Heart right ventricle (tissue), 16 donors: ENCODE measurements at regions of chr1 and their contacts with region 1.

Region 1: DNA sequence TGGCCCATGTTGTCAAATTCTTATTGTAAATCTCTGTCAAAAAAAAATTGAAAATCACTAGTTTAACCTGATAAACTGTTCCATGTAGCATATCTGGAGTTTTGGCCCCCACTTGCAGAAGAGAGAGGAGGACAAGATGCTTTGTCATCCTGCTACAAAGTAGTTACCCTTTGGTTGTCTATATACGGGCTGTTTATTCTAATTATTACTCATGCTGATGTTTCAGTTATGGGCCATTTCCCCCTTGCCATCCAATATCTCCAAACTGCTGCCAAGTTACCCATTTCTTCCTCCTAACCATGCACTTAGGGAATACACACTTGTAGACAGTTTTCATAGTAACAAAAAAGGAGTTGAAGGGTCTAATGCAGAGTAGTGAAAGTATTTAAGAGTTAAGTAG is 22.6 kb downstream of the STX12 start:
- DNase-seq: no peak
- ATAC-seq: no peak
- H3K4me3 ChIP-seq: no peak overlapping the region
- H3K27ac ChIP-seq: no peak overlapping the region
- H3K4me1 ChIP-seq: peaks cover 0 to 8% (median 3%) of the 10 kb centered on the region in 9 donors
- H3K27me3 ChIP-seq: no peaks in the 10 kb centered on the region
- CTCF ChIP-seq: no peak

Region 2: GRCh38 chr1:27760426-27760825 is 35.2 kb before region 1 on chr1:
- intact Hi-C with region 1: loop called in 1 of 10 experiments (anchors 5 kb)
- DNase-seq: no peak
- ATAC-seq: no peak
- H3K4me3 ChIP-seq: no peak overlapping the region
- H3K27ac ChIP-seq: no peak overlapping the region
- H3K4me1 ChIP-seq: peaks cover 0 to 6% (median 0%) of the 10 kb centered on the region in 9 donors
- H3K27me3 ChIP-seq: no peaks in the 10 kb centered on the region
- CTCF ChIP-seq: peak in 4 of 9 donors; percentile 16 to 22 (median 21)

Region 3: DNA sequence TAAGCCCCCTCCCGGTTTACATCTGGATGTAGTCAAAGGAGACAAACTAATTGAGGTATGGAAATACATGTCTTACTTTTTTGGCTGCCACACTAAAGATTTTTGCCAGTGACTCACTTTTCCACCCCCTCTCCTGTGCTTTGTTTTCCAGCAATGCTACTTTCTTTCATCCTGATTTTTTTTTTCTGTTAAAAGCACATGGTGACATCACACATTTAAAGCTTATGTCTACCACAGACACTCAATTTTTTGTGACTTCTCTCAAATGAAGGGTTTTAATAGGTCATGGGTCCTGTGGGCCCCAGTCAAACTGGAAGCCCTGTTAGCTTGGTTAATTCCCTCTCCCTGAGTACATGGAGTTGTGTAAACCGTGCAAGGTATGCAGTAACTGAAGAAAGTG is 37.2 kb after region 1 on chr1:
- intact Hi-C with region 1: no loop called
- DNase-seq: no peak
- ATAC-seq: no peak
- H3K4me3 ChIP-seq: no peak overlapping the region
- H3K27ac ChIP-seq: no peak overlapping the region
- H3K4me1 ChIP-seq: peaks cover 0 to 40% (median 22%) of the 10 kb centered on the region in 9 donors
- H3K27me3 ChIP-seq: no peaks in the 10 kb centered on the region
- CTCF ChIP-seq: no peak